ENCODE measurements at regions of chr13 and their contacts with region 1.

Region 1: DNA sequence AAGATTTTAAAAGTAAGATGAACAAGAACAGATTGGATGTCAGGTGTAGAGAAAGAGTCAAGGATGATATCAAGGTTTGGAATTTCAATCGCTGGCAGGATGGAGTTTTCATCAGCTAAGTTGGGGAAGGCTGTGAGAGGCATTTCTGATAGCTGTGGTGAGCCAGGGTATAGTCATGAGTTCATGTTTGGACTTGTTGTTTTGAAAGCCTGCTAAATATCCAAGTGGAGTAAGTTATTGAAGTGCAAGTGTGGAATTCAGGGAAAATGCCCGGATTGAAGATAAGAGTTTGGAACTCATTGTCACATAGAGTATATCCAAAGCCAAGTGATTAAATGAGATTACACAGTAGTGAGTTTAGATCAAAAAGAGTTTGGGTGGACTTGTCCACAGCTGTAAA is 11.0 kb upstream of the EPSTI1 start:
- DNase-seq: no peak
- H3K4me3 ChIP-seq: no peak overlapping the region
- H3K27ac ChIP-seq: no peak overlapping the region
- H3K4me1 ChIP-seq: peaks cover 0 to 5% (median 0%) of the 10 kb centered on the region in 4 donors
- H3K27me3 ChIP-seq: no peaks in the 10 kb centered on the region
- CTCF ChIP-seq: no peak

Region 2: GRCh38 chr13:42950181-42950580 is 52.8 kb before region 1 on chr13:
- intact Hi-C with region 1: loop called (anchors 1 kb)
- DNase-seq: no peak
- H3K4me3 ChIP-seq: no peak overlapping the region
- H3K27ac ChIP-seq: no peak overlapping the region
- H3K4me1 ChIP-seq: no peaks in the 10 kb centered on the region
- H3K27me3 ChIP-seq: no peaks in the 10 kb centered on the region
- CTCF ChIP-seq: no peak